ENCODE measurements at regions of chr4 and their contacts with region 1.

Region 1: GRCh38 chr4:132955146-132955545 is 193.9 kb upstream of the PCDH10 start:
- DNase-seq: no peak
- ATAC-seq: no peak

Region 2: GRCh38 chr4:132513491-132513890 is 441.7 kb before region 1 on chr4:
- intact Hi-C with region 1: loop called (anchors 10 kb)
- DNase-seq: no peak
- ATAC-seq: no peak

Measured in sciatic nerve (tissue), 2 donors.